Thyroid gland (tissue), 4 donors: ENCODE measurements at regions of chr6 and their contacts with region 1.

Region 1: GRCh38 chr6:122365775-122366403 is 33.6 kb upstream of the HSF2 start:
- DNase-seq: no peak
- H3K4me3 ChIP-seq: no peak overlapping the region
- H3K27ac ChIP-seq: no peak overlapping the region
- H3K4me1 ChIP-seq: no peaks in the 10 kb centered on the region
- H3K27me3 ChIP-seq: no peaks in the 10 kb centered on the region
- CTCF ChIP-seq: no peak
- POLR2A ChIP-seq: no peak

Region 2: GRCh38 chr6:122200440-122200839 is 165.4 kb before region 1 on chr6:
- intact Hi-C with region 1: no loop called
- DNase-seq: no peak
- H3K4me3 ChIP-seq: no peak overlapping the region
- H3K27ac ChIP-seq: no peak overlapping the region
- H3K4me1 ChIP-seq: no peaks in the 10 kb centered on the region
- H3K27me3 ChIP-seq: no peaks in the 10 kb centered on the region
- CTCF ChIP-seq: no peak
- POLR2A ChIP-seq: no peak

Region 3: DNA sequence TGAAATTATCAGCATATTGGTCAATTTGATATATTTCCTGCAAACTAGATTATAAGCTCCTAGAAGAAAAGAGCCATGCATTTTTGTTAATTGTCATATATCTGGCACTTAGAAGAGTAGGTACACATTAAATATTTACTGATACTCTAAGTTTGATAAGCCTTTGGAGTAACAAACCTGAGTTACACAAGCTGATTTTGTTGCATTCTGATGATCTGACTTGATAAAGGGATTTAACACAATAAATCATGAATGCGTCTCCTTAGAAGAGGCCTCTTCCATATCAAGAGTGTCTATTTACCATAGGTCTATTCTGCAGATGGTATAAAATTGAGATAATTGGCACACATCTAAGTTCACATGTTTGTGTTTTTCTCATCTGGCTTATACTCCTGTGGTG is 154.3 kb after region 1 on chr6:
- intact Hi-C with region 1: loop called (anchors 10 kb)
- DNase-seq: no peak
- H3K4me3 ChIP-seq: no peak overlapping the region
- H3K27ac ChIP-seq: no peak overlapping the region
- H3K4me1 ChIP-seq: no peaks in the 10 kb centered on the region
- H3K27me3 ChIP-seq: no peaks in the 10 kb centered on the region
- CTCF ChIP-seq: no peak
- POLR2A ChIP-seq: no peak